Left cardiac atrium (tissue), 4 donors: ENCODE measurements at regions of chr1 and their contacts with region 1.

Region 1: GRCh38 chr1:185733818-185734771 is at the start of gene HMCN1:
- DNase-seq: peak; percentile 88
- ATAC-seq: peak; percentile 93 to 95
- total RNA-seq, gene HMCN1: 10.4 to 22.3 TPM

Region 2: DNA sequence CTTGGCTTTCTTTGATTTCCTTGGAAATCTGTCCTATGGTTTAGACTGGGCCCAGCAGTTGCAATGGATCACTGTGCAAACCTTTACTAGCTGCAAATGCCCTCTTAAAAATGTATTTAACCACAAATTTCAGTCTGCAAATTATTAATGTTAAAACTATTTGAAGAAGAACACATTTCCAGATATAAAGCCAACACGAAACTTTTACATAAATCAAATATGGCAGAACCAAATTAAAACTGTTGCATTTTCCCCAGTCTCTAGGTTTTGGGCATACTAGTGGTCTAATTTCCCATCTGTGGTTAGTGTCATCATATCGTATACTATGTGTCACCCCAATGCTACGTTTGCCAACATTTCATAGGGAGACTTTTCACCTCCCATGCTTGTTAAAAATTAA is 52.4 kb after region 1 on chr1:
- intact Hi-C with region 1: loop called in 1 of 2 experiments (anchors 5 kb)
- DNase-seq: no peak
- ATAC-seq: no peak